ENCODE measurements at regions of chr6 and their contacts with region 1.

Region 1: GRCh38 chr6:33585403-33586107 is 5.5 kb upstream of the BAK1 start:
- DNase-seq: peak; percentile 90
- ATAC-seq: peak; percentile 94
- H3K4me3 Mint-ChIP-seq: peak overlapping the region; percentile 61
- H3K27ac Mint-ChIP-seq: peak overlapping the region; percentile 93
- H3K4me1 Mint-ChIP-seq: peaks cover 31% of the 10 kb centered on the region
- H3K27me3 Mint-ChIP-seq: no peaks in the 10 kb centered on the region
- CTCF ChIP-seq: peak; percentile 96

Region 2: GRCh38 chr6:33607784-33608161 is 22.2 kb after region 1 on chr6:
- CTCF ChIA-PET with region 1: interaction called, 66 read pairs
- POLR2A ChIA-PET with region 1: interaction called, 11 read pairs
- intact Hi-C with region 1: loop called (anchors 1 kb)
- DNase-seq: no peak
- ATAC-seq: peak; percentile 87
- H3K4me3 Mint-ChIP-seq: no peak overlapping the region
- H3K27ac Mint-ChIP-seq: no peak overlapping the region
- H3K4me1 Mint-ChIP-seq: peaks cover 26% of the 10 kb centered on the region
- H3K27me3 Mint-ChIP-seq: no peaks in the 10 kb centered on the region
- CTCF ChIP-seq: no peak

Region 3: GRCh38 chr6:33633462-33634158 is 48.1 kb after region 1 on chr6:
- CTCF ChIA-PET with region 1: interaction called, 3 read pairs
- POLR2A ChIA-PET with region 1: no interaction called
- intact Hi-C with region 1: loop called (anchors 1 kb)
- DNase-seq: peak; percentile 58
- ATAC-seq: peak; percentile 92
- H3K4me3 Mint-ChIP-seq: peak overlapping the region; percentile 81
- H3K27ac Mint-ChIP-seq: peak overlapping the region; percentile 14
- H3K4me1 Mint-ChIP-seq: peaks cover 53% of the 10 kb centered on the region
- H3K27me3 Mint-ChIP-seq: no peaks in the 10 kb centered on the region
- CTCF ChIP-seq: no peak

Measured in activated B cell treated with CpG ODN at 0.5 μM for 24 hours (primary cell).